ENCODE measurements at regions of chr6 and their contacts with region 1.

Region 1: GRCh38 chr6:1554476-1555310 is 55.0 kb upstream of the FOXC1 start:
- DNase-seq: no peak
- H3K4me3 ChIP-seq: peak overlapping the region; percentile 62
- H3K27me3 ChIP-seq: no peaks in the 10 kb centered on the region
- CTCF ChIP-seq: peak; percentile 61

Region 2: DNA sequence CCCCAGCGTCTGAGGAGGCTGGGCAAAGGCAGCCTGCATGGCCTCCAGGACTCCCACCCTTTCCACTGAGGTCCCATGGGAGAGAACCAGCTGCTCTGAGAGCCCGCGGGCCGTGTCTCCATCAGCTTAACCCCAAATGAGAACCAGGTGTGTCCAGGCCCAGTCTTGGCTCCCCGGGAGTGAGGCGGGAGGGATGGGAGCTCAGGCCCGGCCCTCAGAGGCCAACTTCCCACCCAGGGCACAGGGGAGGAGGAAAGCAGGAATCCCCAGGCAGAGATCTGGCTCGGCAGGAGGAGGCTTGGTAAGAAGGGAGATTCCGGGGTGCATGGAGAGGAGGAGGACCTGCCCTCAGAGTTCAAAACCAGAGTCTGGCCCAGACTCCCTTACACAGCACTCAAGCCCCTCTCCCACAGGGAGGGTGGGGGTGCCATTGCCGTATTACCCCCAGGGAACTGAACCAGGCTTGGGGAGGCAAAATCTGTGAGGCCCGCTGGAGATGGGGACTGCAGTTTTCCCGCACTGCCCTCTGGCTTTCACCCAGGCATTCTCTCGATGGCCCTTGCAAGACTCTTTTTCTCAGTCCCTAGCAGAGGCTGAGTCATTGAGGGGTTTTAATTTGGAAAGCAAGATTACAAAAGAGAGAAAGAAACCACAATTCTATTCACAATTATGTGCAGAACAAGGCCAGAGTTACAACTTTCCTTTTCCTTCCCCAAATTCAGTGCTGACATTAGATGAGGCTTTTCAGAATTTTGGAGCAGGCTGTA is 148.2 kb before region 1 on chr6:
- CTCF ChIA-PET with region 1: no interaction called
- POLR2A ChIA-PET with region 1: no interaction called
- DNase-seq: peak; percentile 50
- H3K4me3 ChIP-seq: no peak overlapping the region
- H3K27me3 ChIP-seq: no peaks in the 10 kb centered on the region
- CTCF ChIP-seq: peak; percentile 53

Region 3: DNA sequence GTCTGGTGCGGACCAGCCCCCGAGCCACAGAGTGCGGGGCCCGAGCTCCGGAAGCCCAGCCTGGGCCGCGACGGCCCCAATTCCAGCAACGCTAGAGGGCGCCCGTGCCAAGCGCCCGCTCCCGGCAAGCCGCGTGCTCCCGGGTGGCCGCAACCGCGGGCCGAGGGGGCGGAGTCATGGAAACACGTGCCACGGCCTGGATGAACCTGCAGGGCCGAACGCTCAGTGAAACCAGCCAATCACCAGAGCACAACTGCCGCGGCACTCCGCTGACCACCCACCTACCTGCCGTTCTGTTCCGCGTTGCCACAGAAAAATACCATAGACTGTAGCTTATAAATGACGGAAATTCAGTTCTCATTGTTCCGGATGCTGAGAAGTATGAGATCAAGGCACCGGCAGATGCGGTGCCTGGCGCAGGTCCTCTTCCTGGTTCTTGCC is 30.6 kb before region 1 on chr6:
- CTCF ChIA-PET with region 1: interaction called, 11 read pairs
- POLR2A ChIA-PET with region 1: no interaction called
- DNase-seq: no peak
- H3K4me3 ChIP-seq: no peak overlapping the region
- H3K27me3 ChIP-seq: no peaks in the 10 kb centered on the region
- CTCF ChIP-seq: peak; percentile 48

Region 4: DNA sequence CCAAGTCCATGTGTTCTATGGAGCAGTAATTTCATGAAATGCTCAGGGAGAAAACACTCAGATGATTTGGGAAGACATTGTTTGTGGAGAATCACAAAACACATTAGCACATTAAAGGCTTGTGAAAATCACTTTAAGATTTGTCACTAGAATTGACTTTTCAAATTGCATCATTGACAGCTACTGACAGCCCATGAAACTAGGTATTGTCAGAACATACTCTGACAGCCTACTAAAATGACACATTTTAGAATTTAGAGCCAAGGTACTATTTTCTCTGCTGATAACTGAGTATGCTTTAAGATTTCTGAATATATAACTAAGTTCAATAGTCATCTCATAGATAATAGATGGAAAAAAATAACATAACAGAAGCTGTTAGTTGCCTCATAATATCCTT is 12.4 kb before region 1 on chr6:
- CTCF ChIA-PET with region 1: interaction called, 10 read pairs
- POLR2A ChIA-PET with region 1: no interaction called
- DNase-seq: no peak
- H3K4me3 ChIP-seq: no peak overlapping the region
- H3K27me3 ChIP-seq: no peaks in the 10 kb centered on the region
- CTCF ChIP-seq: no peak

Region 5: DNA sequence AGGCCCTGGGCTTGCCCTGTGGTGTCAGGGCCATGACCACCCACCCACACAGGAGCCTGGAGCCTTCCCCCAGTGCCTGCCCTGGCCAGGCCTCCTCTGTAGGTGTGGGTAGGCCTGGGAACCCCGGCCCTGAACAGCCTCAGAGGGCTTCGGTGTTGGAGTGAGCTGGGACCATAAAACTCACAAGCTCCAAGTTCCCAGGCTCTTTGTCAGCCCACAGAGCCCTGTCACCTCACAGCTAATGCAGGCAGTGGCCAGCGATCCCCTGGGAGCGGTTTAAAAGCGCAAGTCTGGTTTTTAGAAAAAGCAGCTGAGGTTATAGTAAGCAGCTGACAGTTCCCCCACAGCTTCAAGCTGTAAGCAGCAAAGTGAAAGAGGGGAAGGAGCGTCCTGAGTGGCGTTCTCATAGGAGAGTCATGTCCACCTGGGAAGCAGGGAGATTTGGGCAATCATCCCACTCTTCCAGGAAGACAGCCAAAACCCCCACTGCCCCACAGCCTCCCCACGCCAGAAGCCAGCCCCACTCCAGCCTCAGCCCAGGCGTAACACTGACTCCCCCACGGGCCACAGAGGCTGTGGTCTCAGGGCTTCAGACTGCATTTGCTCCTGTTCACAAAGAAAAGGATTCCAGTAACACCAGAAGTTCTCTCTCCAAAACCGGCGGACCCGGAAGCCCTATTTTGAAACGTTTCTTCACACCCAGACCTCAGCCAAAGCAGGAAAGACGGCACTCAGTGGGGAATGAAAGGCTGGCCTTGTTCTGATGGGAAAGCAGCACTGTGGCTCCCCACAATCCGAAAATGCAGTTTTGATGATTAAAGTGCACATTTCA is 20.7 kb after region 1 on chr6:
- CTCF ChIA-PET with region 1: interaction called, 10 read pairs
- POLR2A ChIA-PET with region 1: no interaction called
- DNase-seq: no peak
- H3K4me3 ChIP-seq: no peak overlapping the region
- H3K27me3 ChIP-seq: no peaks in the 10 kb centered on the region; the same call in 1 of the 2 replicates
- CTCF ChIP-seq: no peak